ENCODE measurements at regions of chr7 and their contacts with region 1.

Region 1: DNA sequence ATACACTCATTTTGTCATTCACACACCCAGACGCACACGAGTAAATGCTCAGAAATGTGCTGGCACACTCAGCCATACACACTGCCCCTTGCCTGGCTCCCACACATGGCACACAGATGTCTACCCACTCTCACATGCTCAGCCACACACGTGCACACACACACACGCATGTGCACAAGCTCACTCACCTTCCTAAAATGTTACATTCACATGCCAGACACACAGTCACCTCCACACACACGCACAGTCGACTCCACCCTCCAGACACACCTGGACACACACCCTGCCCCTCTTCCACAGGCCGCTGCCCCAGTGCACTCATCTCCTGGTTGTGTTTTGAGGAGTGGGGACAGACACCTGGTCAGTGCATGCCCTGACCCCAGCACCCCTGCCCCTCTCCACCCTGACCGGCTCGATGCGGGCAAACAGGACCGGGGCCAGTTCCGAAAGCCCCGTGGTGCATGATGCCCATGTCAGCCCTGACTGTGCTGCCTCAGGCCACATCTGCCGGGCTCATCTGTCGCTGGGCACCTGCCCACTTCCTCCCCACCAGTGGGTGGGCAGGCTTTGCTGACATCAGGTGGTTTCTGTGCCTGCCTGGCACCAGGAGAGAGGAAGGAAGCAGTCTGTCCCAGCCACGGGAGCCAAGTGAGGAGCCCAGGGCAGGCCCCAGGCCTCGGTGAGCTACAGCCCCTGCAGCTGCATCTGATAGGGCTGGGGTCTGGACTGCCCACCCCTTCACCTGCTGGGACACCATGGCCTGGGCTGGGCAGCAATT is 84.9 kb upstream of the ZNF716 start:
- DNase-seq: no peak
- H3K4me3 ChIP-seq: no peak overlapping the region
- H3K27ac ChIP-seq: no peak overlapping the region
- H3K4me1 ChIP-seq: no peaks in the 10 kb centered on the region
- H3K27me3 ChIP-seq: no peaks in the 10 kb centered on the region
- CTCF ChIP-seq: no peak

Region 2: DNA sequence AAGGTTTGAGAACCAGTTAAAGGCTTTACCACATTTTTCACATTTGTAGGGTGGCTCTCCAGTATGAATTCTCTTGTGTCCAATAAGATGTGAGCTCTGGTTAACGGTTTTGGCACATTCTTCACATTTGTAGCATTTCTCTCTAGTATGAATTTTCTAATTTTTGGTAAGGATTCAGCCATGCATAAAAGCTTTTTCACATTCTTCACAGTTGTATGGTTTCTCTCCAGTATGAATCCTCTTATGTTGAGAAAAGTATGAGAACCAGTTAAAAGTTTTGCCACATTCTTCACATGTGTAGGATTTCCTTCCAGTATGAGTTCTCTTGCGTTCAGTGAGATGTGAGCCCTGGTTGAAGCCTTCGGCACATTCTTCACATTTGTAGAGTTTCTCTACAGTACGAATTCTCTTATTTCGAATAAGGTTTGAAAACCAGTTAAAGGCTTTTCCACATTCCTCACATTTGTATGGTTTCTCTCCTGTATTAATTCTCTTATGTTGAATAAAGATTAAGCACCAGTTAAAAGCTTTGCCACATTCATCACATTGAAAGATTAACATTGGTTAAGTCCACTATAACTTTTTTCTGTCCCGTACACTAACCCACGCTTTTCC is 199.7 kb before region 1 on chr7:
- CTCF ChIA-PET with region 1: no interaction called
- dilution Hi-C with region 1: no loop called
- in situ Hi-C with region 1: no loop called
- intact Hi-C with region 1: no loop called
- DNase-seq: no peak
- H3K4me3 ChIP-seq: no peak overlapping the region
- H3K27ac ChIP-seq: no peak overlapping the region
- H3K4me1 ChIP-seq: no peaks in the 10 kb centered on the region
- H3K27me3 ChIP-seq: no peaks in the 10 kb centered on the region
- CTCF ChIP-seq: no peak

Region 3: GRCh38 chr7:57256637-57257375 is 108.3 kb before region 1 on chr7:
- CTCF ChIA-PET with region 1: no interaction called
- dilution Hi-C with region 1: no loop called
- in situ Hi-C with region 1: loop called in 1 of 2 experiments (anchors 25 kb)
- intact Hi-C with region 1: no loop called
- DNase-seq: no peak
- H3K4me3 ChIP-seq: no peak overlapping the region
- H3K27ac ChIP-seq: no peak overlapping the region
- H3K4me1 ChIP-seq: no peaks in the 10 kb centered on the region
- H3K27me3 ChIP-seq: no peaks in the 10 kb centered on the region
- CTCF ChIP-seq: no peak

Region 4: GRCh38 chr7:57449904-57450303 is 84.8 kb after region 1 on chr7 and contains the start of gene ZNF716:
- CTCF ChIA-PET with region 1: no interaction called
- dilution Hi-C with region 1: no loop called
- in situ Hi-C with region 1: loop called in 1 of 2 experiments (anchors 25 kb)
- intact Hi-C with region 1: no loop called
- DNase-seq: no peak
- H3K4me3 ChIP-seq: no peak within 1 kb of the TSS
- H3K27ac ChIP-seq: no peak within 1 kb of the TSS
- H3K4me1 ChIP-seq: no peaks in the 10 kb centered on the region
- H3K27me3 ChIP-seq: no peaks in the 10 kb centered on the region
- CTCF ChIP-seq: no peak
- total RNA-seq, gene ZNF716: not detected